ENCODE measurements at regions of chr16 and their contacts with region 1.

Region 1: DNA sequence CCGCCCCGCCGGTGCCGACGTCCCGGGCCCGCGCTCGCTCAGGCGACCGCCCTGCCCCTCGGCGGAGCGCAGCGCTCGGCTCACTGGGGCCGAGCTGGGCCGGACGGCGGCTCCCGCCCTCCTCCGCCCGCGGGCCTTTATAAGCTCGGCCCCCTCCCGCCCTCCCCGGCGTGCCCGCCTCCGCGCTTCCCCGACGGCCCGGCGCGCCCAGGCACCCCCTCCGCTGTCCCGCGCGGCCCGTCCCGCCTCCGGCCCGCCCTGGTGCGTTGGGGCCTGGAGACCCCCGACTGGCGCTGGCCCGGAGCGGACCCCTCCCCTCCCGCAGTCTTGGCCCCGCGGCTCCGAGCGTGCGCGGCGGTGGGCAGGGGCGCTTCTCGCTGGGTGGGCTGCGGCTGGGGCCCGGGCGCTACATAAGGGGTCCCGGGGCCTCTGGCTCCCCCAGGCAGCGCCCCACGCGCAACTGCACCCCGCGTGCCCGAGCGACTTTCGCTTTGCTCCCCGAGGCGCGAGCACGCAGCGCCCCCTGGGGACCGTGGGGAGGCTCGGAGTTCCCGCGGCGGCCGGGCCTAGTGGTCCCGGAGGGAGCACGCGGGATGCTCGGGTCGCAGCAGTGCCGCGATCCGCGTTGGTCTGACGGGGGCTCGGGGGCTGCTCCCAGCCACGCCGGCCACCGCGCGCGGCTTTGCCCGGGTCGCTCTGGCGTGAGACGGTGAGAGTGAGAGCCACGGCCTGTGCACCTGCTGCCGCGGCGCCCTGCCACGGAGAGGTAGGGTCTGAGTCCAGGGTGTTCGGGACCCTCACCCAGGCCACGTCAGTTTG is at the start of gene PIEZO1:
- DNase-seq: peak; percentile 81
- H3K4me3 Mint-ChIP-seq: peak within 1 kb of the TSS; percentile 94
- H3K27ac Mint-ChIP-seq: peak within 1 kb of the TSS; percentile 97
- H3K4me1 Mint-ChIP-seq: peaks cover 43% of the 10 kb centered on the region
- H3K27me3 Mint-ChIP-seq: no peaks in the 10 kb centered on the region
- total RNA-seq, gene PIEZO1: 308 to 323 TPM

Region 2: DNA sequence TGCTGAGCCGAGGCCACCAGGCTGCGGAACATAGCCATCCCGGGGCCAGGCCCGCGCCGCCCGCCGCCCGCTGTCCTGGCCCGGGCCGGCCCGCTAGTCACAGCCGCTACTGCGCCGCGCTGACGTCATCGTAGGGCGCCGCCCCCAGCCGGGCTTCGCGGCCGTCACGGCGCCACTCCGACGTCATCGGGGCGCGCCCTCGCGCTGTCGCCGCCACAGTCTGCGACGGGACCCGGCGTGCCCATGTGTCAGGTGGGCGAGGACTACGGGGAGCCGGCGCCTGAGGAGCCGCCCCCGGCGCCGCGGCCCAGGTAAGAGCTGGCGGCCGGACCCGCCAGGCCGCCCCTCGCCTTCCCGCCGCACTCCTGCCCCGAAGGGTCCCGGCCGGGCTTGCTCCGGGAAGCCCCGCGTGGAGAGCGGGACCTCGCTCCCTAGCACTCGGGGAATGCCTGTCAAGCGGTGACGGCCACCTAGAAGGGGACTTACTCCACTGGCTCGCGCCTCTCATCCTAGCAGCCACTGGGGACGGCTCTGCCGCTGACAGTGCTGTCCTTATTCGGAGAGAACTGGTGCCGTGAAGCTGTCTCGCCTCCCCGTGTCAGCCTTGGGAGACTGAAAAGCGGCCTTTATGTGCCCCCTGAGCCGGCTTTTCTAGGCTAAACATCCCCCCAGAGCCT is 78.9 kb before region 1 on chr16 and contains the starts of genes CTU2 and RNF166:
- CTCF ChIA-PET with region 1: interaction called, 9 read pairs
- POLR2A ChIA-PET with region 1: interaction called, 91 read pairs
- DNase-seq: peak; percentile 93
- H3K4me3 Mint-ChIP-seq: peak within 1 kb of the TSS; percentile 95
- H3K27ac Mint-ChIP-seq: peak within 1 kb of the TSS; percentile 98
- H3K4me1 Mint-ChIP-seq: peaks cover 44% of the 10 kb centered on the region
- H3K27me3 Mint-ChIP-seq: no peaks in the 10 kb centered on the region
- total RNA-seq, gene CTU2: 16.5 to 17.3 TPM
- total RNA-seq, gene RNF166: 155 to 156 TPM

Region 3: DNA sequence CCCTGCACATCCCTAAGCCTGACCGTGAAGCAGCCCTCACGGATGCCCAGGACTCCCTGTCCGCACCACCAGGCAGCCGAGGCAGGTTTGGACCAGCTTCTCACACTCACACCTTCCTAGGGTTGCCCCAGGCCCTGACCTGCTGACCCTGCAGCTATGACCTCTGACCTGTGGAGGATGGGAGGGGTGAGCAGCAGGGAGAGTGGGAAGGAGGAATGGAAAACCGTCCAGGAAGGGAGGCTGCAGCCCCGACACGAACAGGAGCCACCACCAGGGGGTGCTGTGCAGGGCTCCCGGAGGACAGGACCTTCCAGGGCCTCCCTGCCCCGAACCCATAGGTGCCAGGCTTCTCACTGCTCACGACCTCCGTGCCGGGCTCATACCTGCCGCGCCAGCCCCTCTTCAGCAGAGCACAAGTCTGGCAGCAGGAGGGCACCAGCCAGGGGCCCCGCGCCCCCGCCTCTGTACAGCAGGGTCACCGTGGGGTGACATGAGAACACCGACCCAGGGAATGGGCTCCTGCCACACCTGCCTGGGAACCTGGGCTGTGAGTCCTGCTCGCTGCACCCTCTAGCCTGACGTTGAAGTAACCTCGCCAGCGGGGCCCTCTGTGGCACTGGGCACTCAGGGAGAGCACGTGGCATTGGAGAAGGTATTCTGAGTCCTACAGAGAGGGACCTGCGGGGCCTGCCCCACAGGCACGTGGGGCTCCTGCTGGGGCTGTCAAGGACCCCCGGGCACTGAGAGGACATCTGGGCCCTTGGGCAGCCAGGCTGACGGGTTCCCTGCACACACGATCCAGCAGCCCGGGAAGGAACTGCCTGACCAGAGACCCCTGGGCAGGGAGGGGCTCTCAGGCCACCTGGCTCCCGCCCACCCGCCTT is 41.4 kb before region 1 on chr16:
- CTCF ChIA-PET with region 1: interaction called, 24 read pairs
- POLR2A ChIA-PET with region 1: interaction called, 15 read pairs
- DNase-seq: peak; percentile 70
- H3K4me3 Mint-ChIP-seq: no peak overlapping the region
- H3K27ac Mint-ChIP-seq: peak overlapping the region; percentile 40
- H3K4me1 Mint-ChIP-seq: peaks cover 44% of the 10 kb centered on the region
- H3K27me3 Mint-ChIP-seq: no peaks in the 10 kb centered on the region

Region 4: DNA sequence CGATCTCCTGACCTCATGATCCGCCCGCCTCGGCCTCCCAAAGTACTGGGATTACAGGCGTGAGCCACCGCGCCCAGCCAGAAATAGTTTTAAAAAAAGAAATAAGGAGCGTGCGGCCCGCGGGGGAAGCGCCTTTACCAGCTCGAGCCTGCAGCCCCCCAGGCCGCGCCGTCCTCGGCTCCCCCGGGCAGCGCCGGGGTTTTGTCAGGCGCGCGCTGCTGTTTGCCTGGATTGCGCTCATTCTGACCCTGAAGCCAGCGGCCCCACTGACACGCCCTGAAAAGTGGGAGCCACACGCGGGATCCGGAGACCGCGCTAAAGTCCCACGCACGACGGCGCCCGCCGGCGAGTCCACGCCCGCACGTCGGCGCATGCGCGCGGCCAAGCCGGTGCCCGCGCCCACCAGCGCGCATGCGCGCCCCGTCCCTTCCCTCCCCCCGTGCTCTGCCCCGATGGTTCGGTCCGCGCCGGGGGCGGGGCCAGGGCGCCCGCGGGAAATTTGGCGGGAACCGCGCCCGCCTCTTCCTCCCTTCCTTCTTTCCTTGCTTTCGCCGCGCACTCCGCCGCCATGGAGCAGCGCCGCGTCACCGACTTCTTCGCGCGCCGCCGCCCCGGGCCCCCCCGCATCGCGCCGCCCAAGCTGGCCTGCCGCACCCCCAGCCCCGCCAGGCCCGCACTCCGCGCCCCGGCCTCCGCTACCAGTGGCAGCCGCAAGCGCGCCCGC is 18.1 kb after region 1 on chr16 and contains the start of gene CDT1:
- CTCF ChIA-PET with region 1: interaction called, 20 read pairs
- POLR2A ChIA-PET with region 1: interaction called, 249 read pairs
- DNase-seq: peak; percentile 88
- H3K4me3 Mint-ChIP-seq: peak within 1 kb of the TSS; percentile 86
- H3K27ac Mint-ChIP-seq: peak within 1 kb of the TSS; percentile 93
- H3K4me1 Mint-ChIP-seq: peaks cover 35% of the 10 kb centered on the region
- H3K27me3 Mint-ChIP-seq: no peaks in the 10 kb centered on the region
- total RNA-seq, gene CDT1: 133 to 137 TPM

Region 5: GRCh38 chr16:88856828-88857733 is 71.8 kb after region 1 on chr16 and contains the starts of genes GALNS and TRAPPC2L:
- CTCF ChIA-PET with region 1: interaction called, 12 read pairs
- POLR2A ChIA-PET with region 1: interaction called, 14 read pairs
- DNase-seq: peak; percentile 99
- H3K4me3 Mint-ChIP-seq: peak within 1 kb of the TSS; percentile 97
- H3K27ac Mint-ChIP-seq: peak within 1 kb of the TSS; percentile 82
- H3K4me1 Mint-ChIP-seq: peaks cover 33% of the 10 kb centered on the region
- H3K27me3 Mint-ChIP-seq: no peaks in the 10 kb centered on the region
- total RNA-seq, gene GALNS: 35.2 to 38.2 TPM
- total RNA-seq, gene TRAPPC2L: 44.9 to 45.8 TPM